ENCODE measurements at regions of chr1 and their contacts with region 1.

Region 1: GRCh38 chr1:156936721-156937220 is 16.3 kb downstream of the LRRC71 start:
- DNase-seq: peak in 1 of 3 donors; percentile 37
- H3K4me3 ChIP-seq: no peak overlapping the region
- H3K27ac ChIP-seq: no peak overlapping the region
- H3K4me1 ChIP-seq: peaks cover 0 to 1% (median 0%) of the 10 kb centered on the region in 4 experiments
- H3K27me3 ChIP-seq: no peaks in the 10 kb centered on the region

Region 2: DNA sequence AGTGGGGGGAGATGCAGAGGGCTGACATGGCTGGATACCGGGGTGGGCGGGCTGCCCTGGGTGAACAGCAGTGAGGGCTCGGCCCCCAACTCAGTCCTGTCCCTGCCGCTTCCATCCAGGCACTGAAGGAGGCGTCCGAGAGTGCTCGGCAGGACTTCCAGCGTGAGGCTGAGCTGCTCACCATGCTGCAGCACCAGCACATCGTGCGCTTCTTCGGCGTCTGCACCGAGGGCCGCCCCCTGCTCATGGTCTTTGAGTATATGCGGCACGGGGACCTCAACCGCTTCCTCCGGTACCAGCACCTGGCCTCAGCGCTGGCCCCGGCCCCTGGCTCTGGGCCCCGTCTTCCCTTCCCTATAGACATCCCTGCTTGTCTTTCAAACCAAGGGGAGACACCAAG is 60.5 kb before region 1 on chr1:
- CTCF ChIA-PET with region 1: no interaction called
- POLR2A ChIA-PET with region 1: no interaction called
- DNase-seq: no peak
- H3K4me3 ChIP-seq: no peak overlapping the region
- H3K27ac ChIP-seq: no peak overlapping the region
- H3K4me1 ChIP-seq: no peaks in the 10 kb centered on the region
- H3K27me3 ChIP-seq: peaks cover 0 to 29% (median 10%) of the 10 kb centered on the region in 5 experiments

Region 3: GRCh38 chr1:156959414-156959813 is 22.6 kb after region 1 on chr1:
- CTCF ChIA-PET with region 1: interaction called, 12 read pairs
- POLR2A ChIA-PET with region 1: no interaction called
- DNase-seq: peak in 1 of 3 donors; percentile 27
- H3K4me3 ChIP-seq: no peak overlapping the region
- H3K27ac ChIP-seq: no peak overlapping the region
- H3K4me1 ChIP-seq: peaks cover 0 to 38% (median 21%) of the 10 kb centered on the region in 4 experiments
- H3K27me3 ChIP-seq: no peaks in the 10 kb centered on the region

Region 4: DNA sequence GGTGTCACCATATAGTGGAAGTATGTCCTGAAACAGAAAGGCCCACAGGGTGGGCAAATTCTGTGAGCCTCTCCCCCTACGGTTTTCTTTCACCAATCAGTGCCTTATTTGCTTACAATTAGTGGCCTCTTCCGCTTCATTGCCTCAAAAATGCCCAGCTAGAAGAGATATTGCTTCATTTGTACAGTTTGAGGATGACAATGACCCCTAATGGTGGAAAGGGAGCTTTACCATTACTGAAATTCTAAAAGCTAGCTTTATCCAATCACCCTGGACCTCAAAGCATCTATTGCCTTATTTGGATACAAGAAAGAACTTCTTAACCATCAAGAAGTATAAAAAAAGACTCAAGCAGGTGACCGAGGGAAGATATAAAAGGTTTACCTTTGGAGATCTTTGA is 33.2 kb after region 1 on chr1:
- CTCF ChIA-PET with region 1: no interaction called
- POLR2A ChIA-PET with region 1: no interaction called
- DNase-seq: peak in 1 of 3 donors; percentile 22
- H3K4me3 ChIP-seq: no peak overlapping the region
- H3K27ac ChIP-seq: no peak overlapping the region
- H3K4me1 ChIP-seq: no peaks in the 10 kb centered on the region
- H3K27me3 ChIP-seq: no peaks in the 10 kb centered on the region